MCF 10A (cell line): ENCODE measurements at regions of chr13 and their contacts with region 1.

Region 1: GRCh38 chr13:72839831-72840426 is 58.0 kb downstream of the PIBF1 start:
- DNase-seq: peak; percentile 80
- H3K4me3 Mint-ChIP-seq: no peak overlapping the region
- H3K27ac Mint-ChIP-seq: no peak overlapping the region
- H3K4me1 Mint-ChIP-seq: peaks cover 5% of the 10 kb centered on the region
- H3K27me3 Mint-ChIP-seq: no peaks in the 10 kb centered on the region
- CTCF ChIP-seq: peak; percentile 84

Region 2: DNA sequence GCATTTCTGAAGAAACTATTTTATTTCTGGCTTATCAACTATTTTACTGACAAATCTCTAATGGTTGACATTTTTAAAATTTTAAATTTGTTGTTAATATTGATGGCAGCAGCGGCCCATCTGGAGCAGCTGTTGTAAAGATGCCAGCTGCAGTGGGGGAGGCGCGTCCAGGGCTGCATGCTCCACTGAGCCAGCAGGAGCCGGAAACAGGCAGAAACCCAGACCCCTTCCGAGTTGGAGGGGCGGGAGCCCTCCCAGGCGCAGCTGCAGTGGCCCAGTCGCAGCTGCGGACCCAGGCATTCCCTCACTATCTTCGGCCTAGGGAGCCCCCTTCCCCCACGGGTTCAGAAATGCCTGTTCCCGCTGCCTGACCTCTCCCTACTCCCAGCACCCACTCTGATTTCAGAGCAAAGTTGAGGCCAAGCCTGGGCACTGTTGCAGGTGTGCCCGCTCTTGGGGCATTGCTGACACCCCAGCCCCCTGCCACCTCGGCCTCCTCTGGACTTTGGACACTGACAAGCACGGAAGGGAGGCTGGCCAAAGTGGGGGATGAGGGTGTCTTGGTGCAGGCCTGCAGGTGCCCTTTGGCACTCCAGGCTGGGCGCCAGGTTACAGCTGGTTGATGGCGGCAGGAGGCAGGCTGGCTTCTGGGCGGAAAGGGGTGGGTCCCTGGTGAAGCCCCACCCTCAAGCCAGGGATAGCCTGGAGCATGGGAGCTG is 11.2 kb after region 1 on chr13:
- CTCF ChIA-PET with region 1: interaction called, 12 read pairs
- POLR2A ChIA-PET with region 1: no interaction called
- intact Hi-C with region 1: no loop called
- DNase-seq: no peak
- H3K4me3 Mint-ChIP-seq: no peak overlapping the region
- H3K27ac Mint-ChIP-seq: no peak overlapping the region
- H3K4me1 Mint-ChIP-seq: peaks cover 8% of the 10 kb centered on the region
- H3K27me3 Mint-ChIP-seq: no peaks in the 10 kb centered on the region
- CTCF ChIP-seq: no peak

Region 3: DNA sequence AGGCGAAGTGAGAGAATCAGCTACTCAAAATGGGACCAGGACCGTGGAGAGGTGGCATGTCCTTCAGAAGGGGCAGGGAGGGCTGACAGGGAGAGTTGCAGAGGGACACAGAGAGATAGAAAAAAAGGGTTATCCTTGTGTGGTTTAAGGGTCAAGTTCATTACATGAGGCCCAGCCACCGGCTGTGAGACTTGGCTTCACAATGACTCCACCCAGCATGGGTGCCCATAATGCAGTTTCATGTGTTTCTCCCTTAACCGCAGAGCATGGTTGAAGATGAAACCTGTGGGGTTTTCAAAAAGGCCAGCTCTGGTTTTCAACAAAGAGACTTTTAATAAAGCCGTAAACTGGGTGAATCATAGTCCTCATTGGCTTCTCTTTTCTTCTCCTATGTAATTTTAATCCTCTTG is 383.4 kb after region 1 on chr13:
- CTCF ChIA-PET with region 1: no interaction called
- POLR2A ChIA-PET with region 1: no interaction called
- intact Hi-C with region 1: loop called (anchors 10 kb)
- DNase-seq: no peak
- H3K4me3 Mint-ChIP-seq: no peak overlapping the region
- H3K27ac Mint-ChIP-seq: peak overlapping the region; percentile 28
- H3K4me1 Mint-ChIP-seq: peaks cover 17% of the 10 kb centered on the region
- H3K27me3 Mint-ChIP-seq: no peaks in the 10 kb centered on the region
- CTCF ChIP-seq: no peak

Region 4: GRCh38 chr13:74062933-74063332 is 1223.0 kb after region 1 on chr13:
- CTCF ChIA-PET with region 1: no interaction called
- POLR2A ChIA-PET with region 1: no interaction called
- intact Hi-C with region 1: no loop called
- DNase-seq: no peak
- H3K4me3 Mint-ChIP-seq: no peak overlapping the region
- H3K27ac Mint-ChIP-seq: no peak overlapping the region
- H3K4me1 Mint-ChIP-seq: peaks cover 20% of the 10 kb centered on the region
- H3K27me3 Mint-ChIP-seq: no peaks in the 10 kb centered on the region
- CTCF ChIP-seq: no peak